Heart right ventricle (tissue), 16 donors: ENCODE measurements at regions of chr3 and their contacts with region 1.

Region 1: GRCh38 chr3:15629860-15630597 is 28.5 kb downstream of the BTD start:
- DNase-seq: peak in 1 of 2 donors; percentile 74
- ATAC-seq: peak; percentile 81 to 95 (median 92)
- H3K4me3 ChIP-seq: peak overlapping the region in 7 of 10 donors; percentile 6 to 48 (median 33)
- H3K27ac ChIP-seq: peak overlapping the region in 6 of 10 donors; percentile 8 to 70 (median 51)
- H3K4me1 ChIP-seq: peaks cover 0 to 44% (median 31%) of the 10 kb centered on the region in 9 donors
- H3K27me3 ChIP-seq: no peaks in the 10 kb centered on the region
- CTCF ChIP-seq: peak; percentile 63 to 89 (median 75)

Region 2: DNA sequence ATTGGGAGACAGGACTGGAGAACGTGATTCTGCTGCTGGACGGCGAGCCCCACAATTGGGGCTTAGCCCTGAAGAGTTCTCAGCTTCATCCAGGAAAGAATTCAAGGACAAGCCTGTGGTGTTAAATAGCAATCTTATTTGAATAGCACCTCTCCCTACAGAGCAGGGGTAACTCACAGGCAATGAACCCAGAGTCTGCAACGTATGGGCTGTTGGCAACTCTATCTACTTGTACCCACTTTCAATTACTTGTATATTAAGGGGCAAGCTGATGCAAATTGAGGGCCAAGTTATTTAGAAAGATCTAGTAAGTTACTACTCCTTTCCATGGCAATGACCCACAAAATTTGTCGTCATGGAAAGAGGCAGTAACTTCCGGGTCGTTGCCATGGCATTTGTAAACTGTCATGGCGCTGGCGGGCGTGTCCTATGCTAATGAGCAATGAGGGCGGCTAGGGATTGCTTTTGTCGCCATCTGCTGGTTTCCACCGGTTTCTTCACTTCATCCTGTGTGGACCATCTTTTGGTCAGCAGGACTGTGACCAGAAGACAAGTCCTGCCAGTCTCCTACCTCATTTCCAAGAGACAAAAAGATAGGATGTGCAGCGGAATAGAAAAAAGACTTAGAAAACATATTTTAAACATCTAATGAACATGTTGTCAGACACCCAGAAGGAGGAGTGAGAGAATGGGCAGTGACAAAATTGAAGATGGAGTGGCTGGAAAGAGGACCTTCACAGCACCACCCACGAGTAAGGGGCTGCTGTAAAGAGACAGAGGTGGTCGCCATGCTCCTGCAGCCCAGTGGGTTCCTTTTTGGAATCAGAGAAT is 251.9 kb before region 1 on chr3:
- intact Hi-C with region 1: no loop called
- DNase-seq: peak; percentile 87 to 95
- ATAC-seq: peak; percentile 95 to 98 (median 98)
- H3K4me3 ChIP-seq: no peak overlapping the region
- H3K27ac ChIP-seq: peak overlapping the region in 9 of 10 donors; percentile 31 to 77 (median 61)
- H3K4me1 ChIP-seq: peaks cover 0 to 9% (median 4%) of the 10 kb centered on the region in 9 donors
- H3K27me3 ChIP-seq: no peaks in the 10 kb centered on the region
- CTCF ChIP-seq: peak; percentile 63 to 90 (median 87)

Region 3: DNA sequence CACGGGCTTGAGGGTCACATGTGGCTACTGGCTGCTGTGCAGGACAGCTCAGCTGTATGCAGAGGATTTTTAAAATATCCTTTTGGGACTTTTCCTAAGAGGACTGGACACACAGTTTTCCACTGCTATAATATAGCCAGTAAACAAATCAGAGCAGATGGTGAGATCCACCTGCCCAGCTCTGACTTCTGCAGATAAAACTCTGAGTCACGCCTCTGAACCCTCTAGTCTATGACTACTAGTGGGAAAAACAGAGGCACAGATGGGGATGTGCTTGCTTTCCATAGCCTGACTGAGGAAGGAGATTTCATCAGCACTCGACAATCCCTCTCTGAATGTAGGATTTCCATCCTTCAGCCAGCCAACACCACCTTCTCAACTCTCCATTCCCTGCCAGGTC is 153.7 kb before region 1 on chr3:
- intact Hi-C with region 1: no loop called
- DNase-seq: no peak
- ATAC-seq: peak in 6 of 8 donors; percentile 20 to 63 (median 48)
- H3K4me3 ChIP-seq: no peak overlapping the region
- H3K27ac ChIP-seq: no peak overlapping the region
- H3K4me1 ChIP-seq: peaks cover 0 to 41% (median 12%) of the 10 kb centered on the region in 9 donors
- H3K27me3 ChIP-seq: no peaks in the 10 kb centered on the region
- CTCF ChIP-seq: no peak

Region 4: DNA sequence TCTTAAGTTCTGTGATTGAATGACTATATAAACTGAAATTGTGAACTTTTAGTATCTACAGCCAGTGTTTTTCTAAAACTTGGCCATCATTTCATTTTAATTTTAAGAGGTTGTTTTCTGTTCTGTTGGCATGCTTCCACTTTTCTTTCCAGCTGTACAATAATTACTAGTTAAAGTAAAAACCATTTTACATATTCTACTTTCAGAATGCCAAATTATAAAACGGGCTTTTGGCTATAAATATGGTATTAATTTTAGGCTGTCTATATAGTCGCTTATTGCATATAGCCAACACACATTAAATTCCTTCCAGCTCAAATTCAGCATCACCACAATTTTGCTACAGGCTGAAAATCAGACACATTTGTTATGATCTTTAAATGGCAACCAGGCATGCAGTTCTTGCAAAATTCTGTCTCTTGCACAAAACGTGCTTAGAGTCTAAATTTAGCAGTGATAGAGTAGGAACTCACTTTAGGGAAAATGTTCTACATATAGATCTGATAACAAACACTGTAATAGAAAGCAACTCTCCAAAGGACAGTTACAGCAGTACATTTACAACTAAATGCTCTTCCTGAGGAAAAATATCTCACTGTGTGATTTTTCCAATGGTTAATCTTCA is 52.6 kb after region 1 on chr3:
- intact Hi-C with region 1: loop called in 1 of 10 experiments (anchors 10 kb)
- DNase-seq: no peak
- ATAC-seq: peak in 1 of 8 donors; percentile 27
- H3K4me3 ChIP-seq: no peak overlapping the region
- H3K27ac ChIP-seq: no peak overlapping the region
- H3K4me1 ChIP-seq: peaks cover 0 to 30% (median 14%) of the 10 kb centered on the region in 9 donors
- H3K27me3 ChIP-seq: no peaks in the 10 kb centered on the region
- CTCF ChIP-seq: no peak

Region 5: DNA sequence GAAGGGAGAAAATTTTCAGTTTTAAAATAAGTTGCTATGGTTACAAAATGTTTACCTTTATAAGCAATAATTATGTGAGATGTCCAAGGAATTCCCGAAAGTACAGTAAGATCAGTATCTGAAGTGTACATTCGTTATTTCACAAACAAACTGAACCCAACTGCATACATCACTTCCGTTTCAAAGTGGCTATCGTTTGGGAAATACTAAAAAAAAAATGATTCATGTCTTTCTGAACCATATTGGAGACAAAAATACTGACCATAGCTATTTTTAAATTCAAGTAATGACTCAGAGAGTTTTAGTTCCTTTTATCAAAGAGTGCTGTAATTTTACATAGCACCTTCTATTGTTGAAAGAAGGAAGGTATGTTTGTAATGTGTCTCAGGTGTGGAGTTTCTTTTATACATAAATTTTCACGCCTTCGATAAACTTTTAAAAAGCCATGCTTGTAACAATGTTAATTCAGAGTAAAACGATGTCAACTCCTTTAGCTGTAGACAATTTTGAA is 175.8 kb after region 1 on chr3:
- intact Hi-C with region 1: loop called in 7 of 10 experiments (anchors 2 to 5 kb)
- DNase-seq: no peak
- ATAC-seq: peak in 4 of 8 donors; percentile 21 to 63 (median 48)
- H3K4me3 ChIP-seq: no peak overlapping the region
- H3K27ac ChIP-seq: peak overlapping the region in 1 of 10 donors; percentile 69
- H3K4me1 ChIP-seq: peaks cover 0 to 46% (median 7%) of the 10 kb centered on the region in 9 donors
- H3K27me3 ChIP-seq: no peaks in the 10 kb centered on the region
- CTCF ChIP-seq: no peak

Region 6: DNA sequence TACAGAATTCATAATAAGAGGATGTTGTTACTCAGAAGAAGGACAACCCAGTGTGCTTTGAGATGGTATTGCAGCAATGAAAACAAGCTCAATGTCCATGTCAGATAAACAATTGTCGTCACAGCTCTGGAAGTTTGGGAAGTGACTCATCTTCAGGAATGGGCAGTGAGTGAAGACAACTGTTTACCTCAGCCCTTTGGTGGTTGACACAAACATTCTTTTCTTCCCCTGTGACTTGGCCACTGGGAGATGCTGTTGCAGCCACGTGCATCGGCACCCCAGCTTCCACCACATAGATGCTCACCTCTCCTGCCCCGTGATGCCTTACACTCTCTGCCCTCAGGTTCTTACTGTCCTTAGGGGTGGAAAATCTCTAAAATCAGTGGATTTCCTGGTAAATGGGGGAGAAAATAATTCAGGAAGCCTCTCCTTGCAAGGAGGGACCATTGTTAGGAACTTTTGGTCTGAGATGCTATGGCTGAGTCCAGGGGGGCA is 430.4 kb after region 1 on chr3:
- intact Hi-C with region 1: loop called in 2 of 10 experiments (anchors 5 to 10 kb)
- DNase-seq: no peak
- ATAC-seq: peak in 6 of 8 donors; percentile 57 to 87 (median 80)
- H3K4me3 ChIP-seq: no peak overlapping the region
- H3K27ac ChIP-seq: peak overlapping the region in 7 of 10 donors; percentile 45 to 79 (median 69)
- H3K4me1 ChIP-seq: peaks cover 0 to 47% (median 31%) of the 10 kb centered on the region in 9 donors
- H3K27me3 ChIP-seq: no peaks in the 10 kb centered on the region
- CTCF ChIP-seq: peak in 2 of 9 donors; percentile 13 to 17

Region 7: DNA sequence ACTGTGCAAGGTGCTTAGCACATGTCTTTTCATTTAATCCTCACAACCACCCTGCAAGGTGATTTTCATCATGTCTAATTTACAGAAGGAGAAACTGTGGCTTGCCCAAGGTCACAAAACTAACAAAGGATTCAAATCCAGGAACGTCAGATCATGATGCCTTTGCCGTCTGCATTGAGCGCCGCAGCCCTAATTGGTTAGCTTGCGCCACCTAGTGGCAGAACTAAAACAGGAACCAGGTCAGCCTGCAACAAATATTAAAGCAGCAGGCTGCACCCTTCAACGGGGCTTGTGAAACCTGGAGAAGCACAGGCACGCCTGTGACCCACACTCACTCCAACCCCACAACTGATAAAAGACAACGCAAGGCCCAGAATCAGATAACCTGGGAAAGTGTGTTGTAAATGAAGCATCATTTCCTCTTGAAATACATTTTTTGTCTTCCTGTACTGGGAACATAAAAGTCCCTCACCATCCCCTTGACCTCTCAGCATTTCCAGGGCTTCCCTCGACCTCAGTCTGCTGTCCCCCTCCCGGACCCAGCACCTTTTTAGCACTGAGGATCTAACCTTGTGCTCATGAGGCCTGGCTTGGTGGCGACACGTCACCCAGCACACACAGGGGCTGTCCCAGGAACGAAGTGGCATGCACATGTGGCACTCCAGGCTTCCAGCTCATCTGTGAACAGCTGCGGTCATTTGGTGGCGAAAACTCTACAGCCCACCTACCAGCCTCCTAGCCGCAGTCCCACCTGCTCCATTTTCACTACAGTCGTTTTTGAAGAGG is 617.4 kb after region 1 on chr3:
- intact Hi-C with region 1: loop called in 8 of 10 experiments (anchors 5 to 10 kb)
- DNase-seq: peak; percentile 63 to 84
- ATAC-seq: peak; percentile 24 to 83 (median 72)
- H3K4me3 ChIP-seq: no peak overlapping the region
- H3K27ac ChIP-seq: no peak overlapping the region
- H3K4me1 ChIP-seq: peaks cover 0 to 27% (median 16%) of the 10 kb centered on the region in 9 donors
- H3K27me3 ChIP-seq: no peaks in the 10 kb centered on the region
- CTCF ChIP-seq: peak; percentile 85 to 98 (median 94)